ENCODE measurements at regions of chr11 and their contacts with region 1.

Region 1: DNA sequence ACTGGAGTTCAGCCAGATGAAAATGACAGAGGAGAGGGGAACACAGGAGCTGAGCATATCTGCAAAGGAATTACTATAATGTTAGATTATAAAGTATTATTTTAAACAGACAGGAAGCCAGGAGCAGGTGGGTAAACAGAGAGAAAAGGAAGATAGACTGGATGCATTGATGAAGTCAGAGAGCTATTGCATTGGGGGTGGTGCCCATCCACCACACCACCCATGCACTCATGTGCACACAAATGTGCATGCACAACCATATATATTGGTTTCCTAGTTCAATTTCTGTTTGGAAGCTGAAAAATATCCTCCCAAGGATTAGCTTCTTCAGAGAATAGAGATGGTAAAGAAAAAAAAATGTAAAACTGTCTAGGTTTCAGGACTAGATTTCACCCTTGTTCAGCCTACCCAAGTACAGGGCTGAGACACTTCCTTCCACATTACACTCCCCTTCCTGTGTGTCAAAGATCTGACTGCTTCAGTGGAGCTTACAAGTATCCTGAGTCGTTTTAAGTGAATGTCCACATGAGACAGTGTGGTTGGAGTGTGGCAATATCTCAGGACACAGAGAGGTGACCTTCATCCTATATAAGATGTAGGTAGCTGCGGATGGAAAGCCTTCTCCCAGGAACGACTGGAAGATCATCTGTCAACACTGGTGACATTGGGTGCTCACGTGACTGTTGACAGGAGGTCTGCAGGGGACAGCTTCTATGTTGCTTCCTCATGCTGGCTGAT is 12.2 kb upstream of the SMPD1 start:
- DNase-seq: peak; percentile 64
- H3K4me3 ChIP-seq: peak overlapping the region in 1 of 3 experiments; percentile 27
- H3K27ac ChIP-seq: peak overlapping the region; percentile 66
- H3K4me1 ChIP-seq: peaks cover 17% of the 10 kb centered on the region
- H3K27me3 ChIP-seq: no peaks in the 10 kb centered on the region
- CTCF ChIP-seq: no peak
- POLR2A ChIP-seq: peak; percentile 69

Region 2: DNA sequence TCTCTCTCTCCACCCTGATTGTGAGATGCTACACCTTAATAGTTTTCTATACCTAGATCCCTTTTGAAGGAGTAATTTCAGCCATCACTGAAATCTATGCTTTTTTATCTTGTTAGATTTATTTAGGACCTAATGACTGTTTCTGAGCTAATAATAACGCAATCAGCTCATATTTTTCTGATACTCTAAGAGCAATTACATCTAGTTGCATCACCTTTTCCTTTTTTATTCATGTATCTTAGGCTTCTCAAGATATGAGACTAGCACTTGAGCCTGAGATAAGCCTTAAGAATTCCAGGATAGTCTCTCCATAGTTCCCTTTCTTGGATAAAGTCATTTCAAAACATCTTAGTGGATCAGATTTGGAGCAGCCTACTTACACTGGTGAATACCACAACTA is 32.7 kb before region 1 on chr11:
- CTCF ChIA-PET with region 1: no interaction called
- POLR2A ChIA-PET with region 1: no interaction called
- dilution Hi-C with region 1: no loop called
- intact Hi-C with region 1: no loop called
- DNase-seq: no peak
- H3K4me3 ChIP-seq: no peak overlapping the region
- H3K27ac ChIP-seq: no peak overlapping the region
- H3K4me1 ChIP-seq: no peaks in the 10 kb centered on the region
- H3K27me3 ChIP-seq: peaks cover 2 to 3% of the 10 kb centered on the region in 2 experiments
- CTCF ChIP-seq: no peak
- POLR2A ChIP-seq: no peak

Region 3: DNA sequence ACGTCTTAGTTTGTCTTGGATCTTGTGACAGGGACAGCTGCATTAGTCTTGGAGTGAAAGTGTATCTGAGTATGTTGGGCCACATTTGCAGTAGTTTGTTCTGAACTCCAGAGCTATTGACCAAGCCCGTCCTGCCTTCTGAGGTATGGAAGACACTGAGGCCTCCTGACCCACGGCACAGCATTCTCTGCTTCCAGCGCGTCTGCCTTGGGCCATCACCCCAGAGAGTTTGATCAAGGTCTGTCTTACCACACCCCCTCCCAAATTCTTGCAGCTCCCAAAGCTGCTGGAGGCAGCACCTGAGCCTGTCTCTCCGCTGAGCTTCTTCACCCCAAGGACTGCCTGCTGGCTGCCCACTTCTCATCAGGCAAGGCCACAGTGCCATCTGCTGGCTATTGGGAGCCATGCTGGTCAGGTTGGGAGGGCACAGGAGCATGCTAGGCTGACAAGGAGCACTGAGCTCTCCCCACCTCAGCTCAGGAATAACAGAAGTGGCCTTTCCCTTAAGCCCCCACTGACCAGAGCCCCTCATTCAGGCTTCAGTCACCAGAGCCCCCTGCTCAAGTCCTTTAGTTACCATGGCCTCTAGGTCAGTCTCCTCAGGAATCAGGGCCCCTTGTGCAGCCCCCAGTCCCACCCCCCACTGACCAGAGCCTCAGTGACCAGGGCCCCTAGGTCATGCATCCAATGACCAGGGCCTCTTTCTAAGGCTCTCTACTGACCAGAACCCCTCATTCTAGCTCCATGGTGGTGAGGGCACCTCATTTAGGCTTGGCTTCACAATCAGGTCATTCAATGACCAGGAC is 15.0 kb before region 1 on chr11:
- CTCF ChIA-PET with region 1: interaction called, 102 read pairs
- POLR2A ChIA-PET with region 1: no interaction called
- dilution Hi-C with region 1: no loop called
- intact Hi-C with region 1: no loop called
- DNase-seq: peak; percentile 72
- H3K4me3 ChIP-seq: no peak overlapping the region
- H3K27ac ChIP-seq: no peak overlapping the region
- H3K4me1 ChIP-seq: no peaks in the 10 kb centered on the region
- H3K27me3 ChIP-seq: no peaks in the 10 kb centered on the region
- CTCF ChIP-seq: peak; percentile 88 to 97
- POLR2A ChIP-seq: no peak

Region 4: GRCh38 chr11:6411594-6412031 is 33.5 kb after region 1 on chr11:
- CTCF ChIA-PET with region 1: interaction called, 40 read pairs
- POLR2A ChIA-PET with region 1: no interaction called
- dilution Hi-C with region 1: no loop called
- intact Hi-C with region 1: no loop called
- DNase-seq: no peak
- H3K4me3 ChIP-seq: no peak overlapping the region
- H3K27ac ChIP-seq: no peak overlapping the region
- H3K4me1 ChIP-seq: no peaks in the 10 kb centered on the region
- H3K27me3 ChIP-seq: no peaks in the 10 kb centered on the region
- CTCF ChIP-seq: no peak
- POLR2A ChIP-seq: no peak

Region 5: GRCh38 chr11:6443269-6444003 is 65.4 kb after region 1 on chr11:
- CTCF ChIA-PET with region 1: interaction called, 638 read pairs
- POLR2A ChIA-PET with region 1: interaction called, 12 read pairs
- dilution Hi-C with region 1: no loop called
- intact Hi-C with region 1: loop called (anchors 1 kb)
- DNase-seq: peak; percentile 56
- H3K4me3 ChIP-seq: no peak overlapping the region
- H3K27ac ChIP-seq: no peak overlapping the region
- H3K4me1 ChIP-seq: no peaks in the 10 kb centered on the region
- H3K27me3 ChIP-seq: no peaks in the 10 kb centered on the region
- CTCF ChIP-seq: peak; percentile 78 to 93
- POLR2A ChIP-seq: no peak

Region 6: DNA sequence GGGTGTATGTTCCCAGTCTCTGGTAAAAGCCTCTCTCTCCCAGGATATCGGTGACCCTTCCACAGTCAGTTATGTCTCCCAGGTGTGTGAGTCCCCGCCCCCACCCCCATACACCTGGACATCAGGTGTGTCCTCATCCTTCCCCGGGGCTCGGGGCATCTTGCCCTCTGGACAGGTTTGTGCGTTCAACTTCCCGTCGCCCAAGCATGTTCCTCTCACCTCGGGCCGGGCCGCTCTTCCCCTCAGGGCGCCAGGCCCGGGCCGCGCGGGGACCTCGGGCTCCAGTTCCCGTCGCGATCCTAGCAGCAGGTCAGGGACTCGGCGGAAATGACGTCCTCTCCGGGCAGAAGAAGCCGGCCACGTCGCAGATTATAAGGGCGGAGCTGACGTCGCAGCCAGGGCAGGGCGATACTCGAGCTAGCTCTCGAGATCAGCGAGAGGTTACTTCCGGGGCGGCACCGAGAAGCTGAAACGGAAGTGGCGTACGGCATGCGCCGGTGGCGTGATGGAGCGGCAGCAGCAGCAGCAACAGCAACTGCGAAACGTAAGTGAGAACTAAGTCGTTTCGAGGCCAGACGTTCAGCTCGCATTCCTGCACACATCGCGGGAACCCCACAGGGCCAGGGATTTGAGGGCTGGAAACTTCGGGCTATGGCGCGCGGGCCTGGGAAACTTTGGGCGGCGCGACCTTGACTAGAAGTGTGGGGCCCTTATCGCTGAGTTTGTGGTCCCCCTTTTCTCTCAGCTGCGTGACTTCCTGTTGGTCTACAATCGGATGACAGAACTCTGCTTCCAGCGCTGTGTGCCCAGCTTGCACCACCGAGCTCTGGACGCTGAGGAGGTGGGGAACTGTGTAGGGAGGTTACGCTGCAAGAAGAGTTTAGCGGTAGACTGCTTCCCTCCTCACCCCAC is 103.2 kb after region 1 on chr11 and contains the starts of genes ARFIP2 and TIMM10B:
- CTCF ChIA-PET with region 1: interaction called, 28 read pairs
- POLR2A ChIA-PET with region 1: interaction called, 4 read pairs
- dilution Hi-C with region 1: no loop called
- intact Hi-C with region 1: no loop called
- DNase-seq: peak; percentile 98
- H3K4me3 ChIP-seq: peak within 1 kb of the TSS; percentile 19 to 65 (median 57)
- H3K27ac ChIP-seq: peak within 1 kb of the TSS; percentile 72
- H3K4me1 ChIP-seq: peaks cover 18% of the 10 kb centered on the region
- H3K27me3 ChIP-seq: no peaks in the 10 kb centered on the region
- CTCF ChIP-seq: no peak
- POLR2A ChIP-seq: peak; percentile 70
- total RNA-seq, gene ARFIP2: 46.7 and 48.4 TPM in 2 replicates
- total RNA-seq, gene TIMM10B: 29.2 and 31.3 TPM in 2 replicates

Region 7: GRCh38 chr11:6531267-6531752 is 153.2 kb after region 1 on chr11:
- CTCF ChIA-PET with region 1: interaction called, 43 read pairs
- POLR2A ChIA-PET with region 1: no interaction called
- dilution Hi-C with region 1: no loop called
- intact Hi-C with region 1: no loop called
- DNase-seq: peak; percentile 75
- H3K4me3 ChIP-seq: no peak overlapping the region
- H3K27ac ChIP-seq: no peak overlapping the region
- H3K4me1 ChIP-seq: no peaks in the 10 kb centered on the region
- H3K27me3 ChIP-seq: no peaks in the 10 kb centered on the region
- CTCF ChIP-seq: peak; percentile 63 to 70
- POLR2A ChIP-seq: no peak

Region 8: GRCh38 chr11:6682936-6683861 is 305.1 kb after region 1 on chr11 and contains the start of gene MRPL17:
- CTCF ChIA-PET with region 1: interaction called, 18 read pairs
- POLR2A ChIA-PET with region 1: no interaction called
- dilution Hi-C with region 1: no loop called
- intact Hi-C with region 1: loop called (anchors 1 kb)
- DNase-seq: peak; percentile 100
- H3K4me3 ChIP-seq: peak within 1 kb of the TSS; percentile 54 to 91 (median 61)
- H3K27ac ChIP-seq: peak within 1 kb of the TSS; percentile 82
- H3K4me1 ChIP-seq: peaks cover 22% of the 10 kb centered on the region
- H3K27me3 ChIP-seq: no peaks in the 10 kb centered on the region
- CTCF ChIP-seq: peak; percentile 94 to 95
- POLR2A ChIP-seq: peak; percentile 97
- total RNA-seq, gene MRPL17: 86.8 and 87.2 TPM in 2 replicates